OCI-LY7 (cell line): ENCODE measurements at regions of chr17 and their contacts with region 1.

Region 1: DNA sequence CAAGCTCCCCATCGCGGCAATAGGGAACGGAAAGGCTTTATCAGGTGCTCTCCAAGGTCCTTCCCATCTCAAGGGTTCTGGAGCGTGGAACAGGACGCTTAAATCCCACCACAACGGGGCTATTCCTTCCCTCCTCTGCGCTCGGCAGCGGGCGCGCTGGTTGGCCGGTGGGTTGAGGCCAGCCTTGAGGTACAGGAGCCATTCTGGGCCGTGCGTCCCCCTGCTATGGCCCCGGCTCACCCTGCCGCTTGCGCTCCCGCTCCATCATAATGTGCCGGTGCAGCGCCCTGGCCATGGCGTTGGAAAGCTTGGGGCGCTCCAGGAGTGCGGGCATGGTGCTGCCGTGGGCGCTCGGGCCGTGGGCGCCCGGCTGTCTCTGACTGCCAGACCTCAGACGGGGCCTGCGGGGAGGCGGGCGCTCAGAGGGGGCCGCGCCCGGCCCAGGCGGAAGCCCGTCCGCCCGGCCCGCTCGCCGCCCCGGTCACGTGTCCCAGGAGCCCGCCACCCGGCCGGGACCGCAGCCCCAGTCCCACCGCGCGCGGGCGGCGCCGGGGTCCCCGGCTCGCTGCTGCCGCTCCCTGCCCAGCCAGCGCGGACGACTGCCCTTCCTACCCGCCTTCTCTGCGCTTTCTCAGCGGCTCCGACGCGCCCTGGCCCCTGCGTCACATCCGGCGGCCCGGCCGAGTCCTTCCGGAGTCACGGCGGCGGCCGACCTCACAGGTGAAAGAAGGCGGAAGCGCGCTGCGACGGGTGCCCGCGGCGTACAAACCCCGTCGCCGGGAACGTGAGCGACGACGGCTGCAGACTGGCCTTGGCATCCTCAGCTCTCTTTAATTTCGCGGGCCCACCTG is at the start of gene GPS2:
- DNase-seq: peak; percentile 91
- H3K4me3 ChIP-seq: peak within 1 kb of the TSS; percentile 95
- H3K27ac ChIP-seq: peak within 1 kb of the TSS; percentile 79
- H3K4me1 ChIP-seq: peaks cover 47% of the 10 kb centered on the region
- CTCF ChIP-seq: no peak
- total RNA-seq, gene GPS2: 70.4 and 70.5 TPM in 2 replicates

Region 2: DNA sequence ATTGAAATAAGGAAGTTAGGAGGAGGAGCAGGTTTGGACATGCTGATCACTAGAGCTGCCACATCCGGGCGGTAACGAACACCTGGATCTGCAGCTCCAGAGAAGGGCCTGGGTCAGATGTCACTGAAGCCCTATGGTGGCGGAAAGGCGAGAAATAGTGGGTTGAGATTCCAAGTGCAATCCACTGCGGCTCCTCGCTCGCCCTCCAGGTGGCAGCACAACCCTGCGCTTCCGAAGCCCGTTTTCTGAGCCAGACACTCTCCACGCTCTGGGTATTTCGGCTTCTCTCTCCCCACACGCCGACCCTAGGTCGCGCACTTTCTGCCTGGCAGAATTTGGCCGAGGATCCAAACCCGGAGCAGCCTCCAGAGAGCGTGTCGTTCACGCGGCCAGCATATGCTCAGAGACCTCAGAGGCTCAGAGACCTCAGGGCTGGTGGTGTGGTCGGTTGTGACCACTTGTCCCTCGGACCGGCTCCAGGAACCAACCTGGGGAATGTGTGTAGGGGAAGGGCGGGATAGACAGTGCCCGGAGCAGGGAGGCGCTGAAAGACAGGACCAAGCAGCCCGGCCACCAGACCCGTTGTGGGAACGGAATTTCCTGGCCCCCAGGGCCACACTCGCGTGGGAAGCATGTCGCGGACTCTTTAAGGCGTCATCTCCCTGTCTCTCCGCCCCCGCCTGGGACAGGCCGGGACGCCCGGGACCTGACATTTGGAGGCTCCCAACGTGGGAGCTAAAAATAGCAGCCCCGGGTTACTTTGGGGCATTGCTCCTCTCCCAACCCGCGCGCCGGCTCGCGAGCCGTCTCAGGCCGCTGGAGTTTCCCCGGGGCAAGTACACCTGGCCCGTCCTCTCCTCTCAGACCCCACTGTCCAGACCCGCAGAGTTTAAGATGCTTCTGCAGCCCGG is 34.2 kb before region 1 on chr17:
- CTCF ChIA-PET with region 1: no interaction called
- POLR2A ChIA-PET with region 1: no interaction called
- intact Hi-C with region 1: no loop called
- DNase-seq: peak; percentile 92
- H3K4me3 ChIP-seq: peak overlapping the region; percentile 59
- H3K27ac ChIP-seq: peak overlapping the region; percentile 57
- H3K4me1 ChIP-seq: peaks cover 32% of the 10 kb centered on the region
- CTCF ChIP-seq: peak; percentile 96

Region 3: DNA sequence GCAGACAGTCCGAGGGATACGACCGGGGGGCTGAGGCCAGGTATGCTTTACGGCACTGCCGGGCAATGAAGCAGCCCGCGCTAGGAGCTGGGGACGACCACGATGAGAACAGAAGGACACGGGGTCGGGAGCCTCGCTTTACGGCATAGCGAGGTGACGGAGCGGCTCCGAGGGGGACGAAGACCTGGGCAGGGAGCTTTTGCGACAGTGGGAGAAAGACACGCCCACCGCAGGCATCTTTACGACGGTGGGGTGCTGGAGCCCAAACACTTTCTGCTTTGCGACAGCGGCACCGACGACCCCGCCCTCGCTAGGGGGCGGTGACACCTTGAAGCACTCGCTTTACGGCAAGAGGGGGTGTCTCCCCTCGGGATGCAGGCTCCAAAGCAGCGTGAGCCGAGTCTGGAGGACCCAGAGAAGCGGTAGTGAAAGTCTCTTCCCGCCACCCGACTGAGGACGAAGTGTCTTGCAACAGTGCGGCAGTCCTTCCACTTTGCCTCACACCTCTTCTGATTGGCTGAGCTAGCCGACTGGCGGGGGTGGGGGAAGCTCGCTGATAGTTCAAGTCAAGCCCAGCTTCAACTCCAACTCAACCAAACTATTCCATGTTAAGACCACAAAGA is 14.5 kb after region 1 on chr17:
- CTCF ChIA-PET with region 1: no interaction called
- POLR2A ChIA-PET with region 1: interaction called, 12 read pairs
- intact Hi-C with region 1: no loop called
- DNase-seq: peak; percentile 100
- H3K4me3 ChIP-seq: peak overlapping the region; percentile 82
- H3K27ac ChIP-seq: peak overlapping the region; percentile 96
- H3K4me1 ChIP-seq: peaks cover 42% of the 10 kb centered on the region
- CTCF ChIP-seq: no peak

Region 4: GRCh38 chr17:7897773-7898172 is 582.8 kb after region 1 on chr17:
- CTCF ChIA-PET with region 1: no interaction called
- POLR2A ChIA-PET with region 1: no interaction called
- intact Hi-C with region 1: no loop called
- DNase-seq: no peak
- H3K4me3 ChIP-seq: no peak overlapping the region
- H3K27ac ChIP-seq: no peak overlapping the region
- H3K4me1 ChIP-seq: no peaks in the 10 kb centered on the region
- CTCF ChIP-seq: peak; percentile 58